ENCODE measurements at regions of chr2 and their contacts with region 1.

Region 1: GRCh38 chr2:6917071-6917760 is at the start of gene RNF144A:
- DNase-seq: peak; percentile 71 to 81
- ATAC-seq: peak; percentile 90 to 91 (median 91)
- H3K4me3 ChIP-seq: peak within 1 kb of the TSS; percentile 86
- H3K27ac ChIP-seq: peak within 1 kb of the TSS; percentile 77
- H3K4me1 ChIP-seq: peaks cover 25% of the 10 kb centered on the region
- H3K27me3 ChIP-seq: no peaks in the 10 kb centered on the region
- CTCF ChIP-seq: peak; percentile 65
- total RNA-seq, gene RNF144A: 8.2 to 15.6 (median 11.9) TPM

Region 2: GRCh38 chr2:6452702-6453481 is 464.3 kb before region 1 on chr2:
- intact Hi-C with region 1: no loop called
- DNase-seq: no peak
- ATAC-seq: no peak
- H3K4me3 ChIP-seq: no peak overlapping the region
- H3K27ac ChIP-seq: no peak overlapping the region
- H3K4me1 ChIP-seq: no peaks in the 10 kb centered on the region
- H3K27me3 ChIP-seq: no peaks in the 10 kb centered on the region
- CTCF ChIP-seq: no peak

Region 3: GRCh38 chr2:6955511-6956136 is 38.4 kb after region 1 on chr2:
- intact Hi-C with region 1: loop called in 1 of 2 experiments (anchors 1 kb)
- DNase-seq: no peak
- ATAC-seq: no peak
- H3K4me3 ChIP-seq: no peak overlapping the region
- H3K27ac ChIP-seq: no peak overlapping the region
- H3K4me1 ChIP-seq: peaks cover 38% of the 10 kb centered on the region
- H3K27me3 ChIP-seq: no peaks in the 10 kb centered on the region
- CTCF ChIP-seq: no peak

Region 4: GRCh38 chr2:7014174-7014640 is 97.0 kb after region 1 on chr2:
- intact Hi-C with region 1: loop called (anchors 2 to 5 kb)
- DNase-seq: no peak
- ATAC-seq: peak in 3 of 4 donors; percentile 35 to 48 (median 38)
- H3K4me3 ChIP-seq: no peak overlapping the region
- H3K27ac ChIP-seq: peak overlapping the region; percentile 85
- H3K4me1 ChIP-seq: peaks cover 93% of the 10 kb centered on the region
- H3K27me3 ChIP-seq: no peaks in the 10 kb centered on the region
- CTCF ChIP-seq: peak; percentile 38

Region 5: DNA sequence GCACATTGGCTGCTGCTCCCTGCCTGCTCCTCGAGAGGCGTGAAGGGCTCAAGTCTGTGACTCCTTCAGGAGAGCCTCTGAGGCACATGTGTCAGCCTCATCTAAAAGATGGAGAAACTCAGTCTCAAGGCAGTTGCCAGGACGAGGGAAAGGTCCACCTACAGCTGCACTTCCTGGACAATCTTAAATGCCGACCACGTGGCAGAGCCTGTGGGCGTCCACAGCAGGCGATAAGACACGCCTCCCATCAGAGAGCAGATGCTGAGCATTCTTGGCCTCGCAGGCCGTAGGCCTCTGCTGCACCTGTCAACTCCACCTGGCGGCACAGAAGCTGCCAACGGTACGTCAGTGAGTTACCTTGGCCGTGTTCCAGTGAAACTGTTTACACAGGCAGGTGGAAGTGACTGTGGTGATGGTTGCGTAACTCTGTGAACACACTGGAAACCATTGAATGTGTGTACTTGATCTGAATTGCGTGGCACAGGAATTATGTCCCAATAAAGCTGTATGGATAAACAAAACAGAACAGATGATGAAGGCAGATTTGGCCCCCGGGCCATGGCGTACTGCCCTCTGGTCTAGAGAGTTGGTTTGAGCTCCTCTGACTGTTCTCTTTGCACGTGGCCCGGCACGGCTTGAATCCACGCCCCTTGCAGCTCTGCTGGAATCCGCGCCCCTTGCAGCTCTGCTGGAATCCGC is 114.5 kb after region 1 on chr2:
- intact Hi-C with region 1: loop called (anchors 5 kb)
- DNase-seq: peak; percentile 52 to 79
- ATAC-seq: peak; percentile 82 to 95 (median 86)
- H3K4me3 ChIP-seq: no peak overlapping the region
- H3K27ac ChIP-seq: peak overlapping the region; percentile 67
- H3K4me1 ChIP-seq: peaks cover 8% of the 10 kb centered on the region
- H3K27me3 ChIP-seq: no peaks in the 10 kb centered on the region
- CTCF ChIP-seq: no peak